IMR-90 (cell line): ENCODE measurements at regions of chr17 and their contacts with region 1.

Region 1: DNA sequence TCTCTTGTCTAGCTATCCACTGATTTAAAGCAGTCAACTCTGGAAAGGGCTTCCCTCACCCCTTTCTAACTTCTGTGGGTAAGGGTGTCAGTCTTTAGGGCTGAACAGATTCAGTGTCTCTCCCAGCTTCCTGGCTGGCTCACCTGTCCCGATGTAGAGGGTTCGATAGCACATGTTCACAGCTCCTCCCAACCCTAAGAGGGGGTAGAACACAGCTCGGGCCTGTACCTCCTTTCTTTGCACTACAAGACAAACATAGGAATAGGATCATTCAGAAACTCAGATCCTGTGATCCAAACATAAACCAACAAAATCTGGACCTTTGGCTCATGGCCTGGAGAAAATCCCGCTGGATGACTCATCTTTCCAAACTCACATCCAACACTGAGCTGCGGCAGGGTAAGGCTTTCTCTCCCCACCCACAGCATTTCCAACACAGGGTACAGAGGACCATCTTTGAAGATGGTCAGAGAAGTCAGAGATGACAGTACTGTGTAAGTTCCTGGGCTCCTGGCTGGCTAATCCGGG is 5.8 kb upstream of the DHRS13 start:
- DNase-seq: peak; percentile 91
- ATAC-seq: peak; percentile 90
- H3K4me3 ChIP-seq: no peak overlapping the region
- H3K27ac ChIP-seq: peak overlapping the region; percentile 87; the same call in 1 of the 2 replicates
- H3K4me1 ChIP-seq: peaks cover 20% of the 10 kb centered on the region
- H3K27me3 ChIP-seq: no peaks in the 10 kb centered on the region
- CTCF ChIP-seq: no peak
- POLR2A ChIP-seq: no peak
- RAD21 ChIP-seq: no peak

Region 2: GRCh38 chr17:28384281-28385036 is 524.2 kb before region 1 on chr17:
- CTCF ChIA-PET with region 1: no interaction called
- POLR2A ChIA-PET with region 1: no interaction called
- dilution Hi-C with region 1: no loop called
- in situ Hi-C with region 1: no loop called
- intact Hi-C with region 1: no loop called
- DNase-seq: no peak
- ATAC-seq: no peak
- H3K4me3 ChIP-seq: no peak overlapping the region
- H3K27ac ChIP-seq: no peak overlapping the region
- H3K4me1 ChIP-seq: peaks cover 3% of the 10 kb centered on the region; the same call in 1 of the 2 replicates
- H3K27me3 ChIP-seq: no peaks in the 10 kb centered on the region
- CTCF ChIP-seq: no peak
- POLR2A ChIP-seq: no peak
- RAD21 ChIP-seq: no peak

Region 3: DNA sequence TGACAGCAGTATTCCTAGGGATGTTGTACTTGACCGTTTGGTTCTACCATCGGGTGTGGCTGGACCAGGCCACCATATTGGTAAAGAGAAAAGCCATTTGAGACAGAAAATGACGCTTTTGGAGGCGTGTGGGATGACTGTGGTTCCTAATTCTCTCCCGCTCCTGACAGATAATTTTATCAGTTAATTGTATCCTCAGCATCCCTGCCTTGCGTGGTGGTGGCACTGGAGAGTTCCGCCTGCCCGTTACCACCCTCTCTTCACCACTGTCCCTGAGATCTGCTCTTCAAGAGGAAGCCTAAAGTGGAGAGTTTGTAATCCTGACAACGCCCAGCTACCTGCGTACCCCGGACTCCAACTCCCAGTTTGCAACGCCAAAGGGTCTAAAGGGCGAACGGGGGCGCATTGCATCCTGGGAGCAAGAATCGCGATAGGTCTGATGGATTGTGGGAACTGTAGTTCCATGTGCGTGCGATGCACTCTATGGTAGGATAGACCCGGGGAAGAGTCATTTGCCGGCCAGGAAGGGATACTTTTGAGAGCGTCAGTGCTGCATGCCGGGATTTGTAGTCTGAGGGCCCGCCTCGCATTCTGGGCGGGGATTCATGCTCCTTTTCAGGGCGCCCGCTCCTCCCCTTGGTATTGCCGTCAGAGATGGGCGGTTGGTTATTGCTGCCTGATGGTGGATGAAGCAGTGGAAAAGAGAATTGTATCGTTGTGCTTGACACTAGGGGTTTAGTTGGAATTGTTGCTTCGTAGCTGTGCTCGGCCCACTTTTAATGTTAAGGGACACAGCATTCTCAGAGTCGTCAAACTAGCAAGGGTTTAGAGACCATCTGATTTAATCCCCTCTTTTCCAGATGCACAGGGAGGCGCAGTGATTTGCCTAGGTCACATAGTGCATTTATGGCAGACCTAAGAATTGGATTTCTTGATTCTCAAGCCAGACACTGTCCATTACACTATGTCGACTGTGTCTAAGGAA is 43.6 kb after region 1 on chr17:
- CTCF ChIA-PET with region 1: interaction called, 3 read pairs
- POLR2A ChIA-PET with region 1: no interaction called
- dilution Hi-C with region 1: no loop called
- in situ Hi-C with region 1: no loop called
- intact Hi-C with region 1: loop called (anchors 5 kb)
- DNase-seq: peak; percentile 99
- ATAC-seq: peak; percentile 69
- H3K4me3 ChIP-seq: peak overlapping the region; percentile 51
- H3K27ac ChIP-seq: peak overlapping the region; percentile 82
- H3K4me1 ChIP-seq: no peaks in the 10 kb centered on the region
- H3K27me3 ChIP-seq: no peaks in the 10 kb centered on the region
- CTCF ChIP-seq: no peak
- POLR2A ChIP-seq: no peak
- RAD21 ChIP-seq: no peak

Region 4: GRCh38 chr17:29019475-29020181 is 110.9 kb after region 1 on chr17:
- CTCF ChIA-PET with region 1: no interaction called
- POLR2A ChIA-PET with region 1: no interaction called
- dilution Hi-C with region 1: no loop called
- in situ Hi-C with region 1: no loop called
- intact Hi-C with region 1: no loop called
- DNase-seq: no peak
- ATAC-seq: no peak
- H3K4me3 ChIP-seq: no peak overlapping the region
- H3K27ac ChIP-seq: no peak overlapping the region
- H3K4me1 ChIP-seq: no peaks in the 10 kb centered on the region
- H3K27me3 ChIP-seq: peaks cover 87% of the 10 kb centered on the region
- CTCF ChIP-seq: no peak
- POLR2A ChIP-seq: no peak
- RAD21 ChIP-seq: no peak